ENCODE measurements at regions of chr10 and their contacts with region 1.

Region 1: GRCh38 chr10:14358886-14359573 is 28.3 kb upstream of the FRMD4A start:
- DNase-seq: no peak
- ATAC-seq: no peak
- H3K4me3 ChIP-seq: no peak overlapping the region
- H3K4me3 Mint-ChIP-seq: no peak overlapping the region
- H3K27ac ChIP-seq: no peak overlapping the region
- H3K27ac Mint-ChIP-seq: no peak overlapping the region
- H3K4me1 ChIP-seq: no peaks in the 10 kb centered on the region
- H3K4me1 Mint-ChIP-seq: no peaks in the 10 kb centered on the region
- H3K27me3 ChIP-seq: peaks cover 0 to 20% of the 10 kb centered on the region in 2 experiments
- H3K27me3 Mint-ChIP-seq: peaks cover 0 to 12% of the 10 kb centered on the region in 2 donors

Region 2: DNA sequence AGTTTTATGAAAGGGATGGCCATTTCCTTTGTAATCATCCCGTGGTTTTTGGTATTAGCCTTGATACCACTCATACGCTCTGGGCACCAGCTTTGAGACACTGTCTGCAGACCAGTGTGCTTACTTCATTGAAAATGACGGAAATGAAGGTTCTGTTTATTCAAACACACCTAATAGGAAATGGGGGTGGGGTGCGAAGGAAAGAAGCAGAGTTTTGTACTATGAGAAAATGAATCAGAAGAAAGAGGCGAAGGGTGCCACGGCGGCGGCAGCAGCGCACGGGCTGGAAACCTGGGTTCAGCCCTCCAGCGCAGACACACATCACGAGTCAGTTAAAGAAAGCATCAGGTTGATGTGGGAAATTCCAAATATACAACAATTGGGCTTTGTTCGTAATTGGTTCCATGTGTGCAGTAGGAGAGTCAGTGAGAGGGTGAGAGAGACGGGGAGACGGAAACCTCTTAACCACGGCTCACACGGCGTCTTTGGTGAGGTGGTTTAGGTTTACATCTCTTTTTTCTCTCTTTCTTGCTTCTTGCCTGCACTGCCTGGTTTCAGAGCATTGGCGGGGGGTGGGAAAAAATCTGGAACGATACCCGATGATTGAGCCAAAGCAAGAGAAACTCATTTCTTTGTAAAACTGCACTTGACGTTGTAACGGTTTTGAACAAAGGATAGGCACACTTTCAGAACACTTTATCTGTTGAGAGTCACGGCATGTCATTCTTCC is 349.5 kb before region 1 on chr10:
- CTCF ChIA-PET with region 1: no interaction called
- POLR2A ChIA-PET with region 1: no interaction called
- DNase-seq: peak; percentile 21 to 88 (median 60)
- ATAC-seq: peak; percentile 82 to 91 (median 85)
- H3K4me3 ChIP-seq: peak overlapping the region; percentile 39 to 64
- H3K4me3 Mint-ChIP-seq: peak overlapping the region; percentile 77 to 78 (median 77)
- H3K27ac ChIP-seq: peak overlapping the region; percentile 31
- H3K27ac Mint-ChIP-seq: peak overlapping the region; percentile 89 to 94
- H3K4me1 ChIP-seq: peaks cover 31 to 34% of the 10 kb centered on the region in 2 experiments
- H3K4me1 Mint-ChIP-seq: peaks cover 39 to 61% (median 40%) of the 10 kb centered on the region in 3 donors
- H3K27me3 ChIP-seq: peaks cover 0 to 4% of the 10 kb centered on the region in 2 experiments
- H3K27me3 Mint-ChIP-seq: no peaks in the 10 kb centered on the region

Region 3: DNA sequence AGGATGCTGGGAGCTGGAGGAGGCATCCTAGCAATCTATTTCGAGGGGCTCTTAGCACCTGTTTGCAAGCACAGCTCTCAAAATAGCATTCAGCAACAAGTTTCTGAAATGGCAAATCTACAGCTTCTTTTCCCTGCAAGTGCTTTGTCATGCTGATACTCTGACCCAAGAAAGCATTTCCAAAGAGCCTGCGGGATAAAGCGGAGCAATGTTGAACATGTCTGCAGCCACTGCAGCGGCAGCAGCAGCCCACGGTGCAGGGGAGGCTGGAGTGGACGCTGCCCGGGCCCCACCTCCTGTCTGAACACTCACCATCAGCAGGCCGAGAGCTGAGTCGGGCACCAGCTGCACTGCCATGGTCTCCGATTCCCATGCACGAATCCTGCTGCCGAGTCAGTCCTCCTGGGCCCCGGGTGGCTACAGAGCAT is 29.3 kb before region 1 on chr10:
- CTCF ChIA-PET with region 1: no interaction called
- POLR2A ChIA-PET with region 1: no interaction called
- DNase-seq: no peak
- ATAC-seq: no peak
- H3K4me3 ChIP-seq: no peak overlapping the region
- H3K4me3 Mint-ChIP-seq: no peak overlapping the region
- H3K27ac ChIP-seq: no peak overlapping the region
- H3K27ac Mint-ChIP-seq: no peak overlapping the region
- H3K4me1 ChIP-seq: no peaks in the 10 kb centered on the region
- H3K4me1 Mint-ChIP-seq: no peaks in the 10 kb centered on the region
- H3K27me3 ChIP-seq: peaks cover 0 to 25% of the 10 kb centered on the region in 2 experiments
- H3K27me3 Mint-ChIP-seq: peaks cover 32 to 49% of the 10 kb centered on the region in 2 donors

Region 4: DNA sequence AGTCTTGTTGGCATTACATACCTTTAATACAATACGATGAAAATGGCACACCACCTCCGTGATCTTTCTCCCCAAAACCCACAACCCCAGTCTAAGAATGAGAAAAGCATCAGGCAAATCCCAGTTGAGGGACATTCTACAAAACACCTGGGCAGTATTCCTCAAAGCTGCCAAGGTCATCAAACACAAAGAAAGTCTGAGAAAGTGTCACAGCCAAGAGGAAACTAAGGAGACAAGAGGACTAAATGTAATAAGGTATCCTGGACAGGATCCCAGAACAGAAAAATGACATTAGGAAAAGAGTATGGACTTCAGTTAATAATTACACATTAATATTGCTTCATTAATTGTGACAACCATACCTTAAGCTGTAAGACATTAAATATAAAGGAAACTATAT is 13.8 kb before region 1 on chr10:
- CTCF ChIA-PET with region 1: no interaction called
- POLR2A ChIA-PET with region 1: no interaction called
- DNase-seq: no peak
- ATAC-seq: no peak
- H3K4me3 ChIP-seq: no peak overlapping the region
- H3K4me3 Mint-ChIP-seq: no peak overlapping the region
- H3K27ac ChIP-seq: no peak overlapping the region
- H3K27ac Mint-ChIP-seq: no peak overlapping the region
- H3K4me1 ChIP-seq: no peaks in the 10 kb centered on the region
- H3K4me1 Mint-ChIP-seq: no peaks in the 10 kb centered on the region
- H3K27me3 ChIP-seq: peaks cover 0 to 8% of the 10 kb centered on the region in 2 experiments
- H3K27me3 Mint-ChIP-seq: peaks cover 8 to 30% of the 10 kb centered on the region in 2 donors

Region 5: DNA sequence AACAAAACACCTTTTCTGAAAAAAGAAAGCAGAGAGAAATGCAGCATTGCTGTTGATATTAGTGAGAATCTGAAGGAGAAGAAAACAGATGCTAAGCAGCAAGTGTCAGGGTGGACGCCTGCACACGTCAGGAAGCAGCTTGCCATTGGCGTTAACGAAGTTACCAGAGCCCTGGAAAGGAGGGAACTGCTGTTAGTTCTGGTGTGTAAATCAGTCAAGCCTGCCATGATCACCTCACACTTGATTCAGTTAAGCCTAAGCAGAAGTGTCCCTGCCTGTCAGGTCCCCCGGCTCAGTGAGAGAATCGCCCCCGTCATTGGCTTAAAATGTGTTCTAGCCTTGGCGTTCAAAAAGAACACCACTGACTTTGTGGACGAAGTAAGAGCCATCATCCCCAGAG is 744.5 kb after region 1 on chr10:
- CTCF ChIA-PET with region 1: interaction called in 1 of 2 experiments, 10 read pairs
- POLR2A ChIA-PET with region 1: no interaction called
- DNase-seq: no peak
- ATAC-seq: no peak
- H3K4me3 ChIP-seq: no peak overlapping the region
- H3K4me3 Mint-ChIP-seq: peak overlapping the region in 1 of 3 donors; percentile 28
- H3K27ac ChIP-seq: no peak overlapping the region
- H3K27ac Mint-ChIP-seq: no peak overlapping the region
- H3K4me1 ChIP-seq: peaks cover under 1 to 24% of the 10 kb centered on the region in 2 experiments
- H3K4me1 Mint-ChIP-seq: peaks cover 23 to 34% (median 27%) of the 10 kb centered on the region in 3 donors
- H3K27me3 ChIP-seq: no peaks in the 10 kb centered on the region
- H3K27me3 Mint-ChIP-seq: no peaks in the 10 kb centered on the region

Measured in T-cell (primary cell).